Activated naive CD4-positive, alpha-beta T cell treated with anti-CD3 and anti-CD28 coated beads for 36 hours (primary cell): ENCODE measurements at regions of chr3 and their contacts with region 1.

Region 1: GRCh38 chr3:118938183-118938961 is 96.3 kb downstream of the IGSF11 start:
- DNase-seq: no peak
- H3K4me3 Mint-ChIP-seq: no peak overlapping the region
- H3K27ac Mint-ChIP-seq: peak overlapping the region; percentile 42
- H3K4me1 Mint-ChIP-seq: peaks cover 26% of the 10 kb centered on the region
- H3K27me3 Mint-ChIP-seq: no peaks in the 10 kb centered on the region

Region 2: DNA sequence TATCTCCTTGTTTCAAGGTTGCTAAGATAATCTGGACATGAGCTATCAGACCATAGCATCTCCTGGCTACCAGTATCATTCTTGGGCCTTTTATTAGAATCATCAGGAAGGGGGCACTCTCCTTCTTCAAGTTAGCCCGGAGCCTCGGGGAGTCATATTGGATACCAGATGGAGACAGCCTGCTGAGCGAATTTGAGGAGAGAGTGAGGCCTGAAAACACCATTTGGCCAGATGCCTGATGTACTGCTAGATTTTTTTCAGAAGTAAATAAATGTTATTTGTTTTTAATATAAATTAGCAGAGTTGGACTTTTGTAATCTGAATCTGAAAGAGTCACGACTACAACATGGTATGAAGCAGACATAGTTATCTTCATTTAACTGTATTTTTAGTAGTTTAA is 752.3 kb before region 1 on chr3:
- CTCF ChIA-PET with region 1: no interaction called
- intact Hi-C with region 1: no loop called
- DNase-seq: no peak
- H3K4me3 Mint-ChIP-seq: no peak overlapping the region
- H3K27ac Mint-ChIP-seq: no peak overlapping the region
- H3K4me1 Mint-ChIP-seq: no peaks in the 10 kb centered on the region
- H3K27me3 Mint-ChIP-seq: no peaks in the 10 kb centered on the region

Region 3: GRCh38 chr3:118949113-118949760 is 10.9 kb after region 1 on chr3:
- CTCF ChIA-PET with region 1: interaction called, 3 read pairs
- intact Hi-C with region 1: loop called (anchors 1 kb)
- DNase-seq: no peak
- H3K4me3 Mint-ChIP-seq: no peak overlapping the region
- H3K27ac Mint-ChIP-seq: peak overlapping the region; percentile 55
- H3K4me1 Mint-ChIP-seq: peaks cover 45% of the 10 kb centered on the region
- H3K27me3 Mint-ChIP-seq: no peaks in the 10 kb centered on the region

Region 4: DNA sequence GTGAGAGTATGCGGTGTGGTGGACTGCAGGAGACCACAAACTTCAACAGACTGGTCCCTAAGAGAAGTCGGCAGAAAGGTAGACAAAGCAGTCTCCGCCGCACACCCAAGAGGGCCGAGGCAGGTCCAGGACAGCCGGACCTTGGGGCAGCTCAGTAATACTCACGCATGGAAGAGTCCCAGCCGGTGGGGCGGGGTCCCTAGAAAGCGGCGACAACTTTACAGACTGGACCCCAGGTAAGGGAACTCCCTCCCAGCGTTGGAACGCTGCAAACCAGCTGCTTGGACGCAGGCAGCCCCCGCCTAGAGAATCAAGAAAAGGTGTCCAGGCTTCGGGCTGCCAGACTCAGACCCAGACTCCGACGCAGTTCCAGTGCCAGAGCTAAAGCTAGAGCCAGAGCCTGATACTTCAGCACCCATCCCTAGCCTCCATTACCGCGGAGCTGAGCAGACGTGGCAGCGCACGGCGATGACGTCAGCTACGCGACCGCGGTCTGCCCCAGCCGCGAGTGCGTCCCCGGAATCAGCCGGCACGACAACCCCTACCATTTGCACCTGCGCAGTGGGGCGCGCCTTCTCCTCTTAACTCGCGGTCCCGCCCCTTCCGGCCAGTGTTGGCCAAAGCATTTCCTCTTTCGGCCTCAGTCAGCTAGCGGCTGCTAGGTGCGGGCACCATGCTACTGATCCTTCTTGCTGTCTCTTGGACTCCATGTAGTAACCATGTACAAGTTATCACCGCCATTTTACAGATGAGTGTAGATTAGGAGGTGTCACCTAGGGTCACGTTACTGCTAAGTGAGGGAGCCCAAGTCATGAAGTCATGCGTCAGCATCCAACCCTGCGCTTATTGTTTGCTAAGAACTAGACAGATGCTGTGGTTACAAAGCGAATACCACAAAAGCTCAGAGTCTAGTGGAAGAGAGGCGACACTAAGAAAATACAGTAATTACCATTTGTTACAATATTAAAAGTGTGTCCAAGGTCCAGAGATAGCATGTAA is 525.1 kb after region 1 on chr3 and contains the start of gene TMEM39A:
- CTCF ChIA-PET with region 1: no interaction called
- intact Hi-C with region 1: no loop called
- DNase-seq: peak; percentile 98
- H3K4me3 Mint-ChIP-seq: peak within 1 kb of the TSS; percentile 96
- H3K27ac Mint-ChIP-seq: peak within 1 kb of the TSS; percentile 90
- H3K4me1 Mint-ChIP-seq: peaks cover 32% of the 10 kb centered on the region
- H3K27me3 Mint-ChIP-seq: no peaks in the 10 kb centered on the region
- total RNA-seq, gene TMEM39A: 21.4 to 26.9 TPM

Region 5: DNA sequence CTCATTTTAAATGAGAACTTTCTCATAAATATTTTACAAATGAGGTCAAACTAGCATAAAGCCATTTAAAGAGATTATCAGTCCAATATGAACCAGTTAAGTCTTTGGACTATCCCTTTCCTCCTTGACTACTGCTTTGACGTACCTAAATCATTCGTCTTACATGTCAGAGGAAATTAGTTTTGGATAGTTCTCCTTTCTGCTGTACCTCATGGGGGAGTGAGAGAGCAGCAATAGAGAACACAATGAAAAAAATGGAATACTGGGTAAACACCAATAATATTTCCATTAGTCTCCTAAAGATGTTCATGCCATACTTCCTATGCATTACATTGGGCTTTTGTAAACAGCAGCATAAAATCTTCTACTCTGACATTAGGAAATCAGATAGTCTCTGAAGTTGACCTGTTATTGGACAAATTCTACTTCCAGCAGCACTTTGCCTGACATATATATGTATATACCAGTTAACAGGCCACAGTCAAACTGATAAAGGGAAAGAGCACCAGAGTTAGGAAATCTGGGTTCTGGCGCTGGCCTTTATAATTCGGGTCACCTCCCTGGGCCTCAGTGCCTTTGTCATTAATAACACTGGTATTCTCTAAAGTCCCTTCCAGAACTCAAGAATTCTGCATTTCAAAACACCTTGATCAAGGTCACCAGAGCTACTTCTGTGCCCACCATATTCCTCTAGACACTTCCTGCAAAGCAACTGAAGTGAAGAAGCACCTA is 586.7 kb after region 1 on chr3:
- CTCF ChIA-PET with region 1: no interaction called
- intact Hi-C with region 1: no loop called
- DNase-seq: no peak
- H3K4me3 Mint-ChIP-seq: no peak overlapping the region
- H3K27ac Mint-ChIP-seq: no peak overlapping the region
- H3K4me1 Mint-ChIP-seq: no peaks in the 10 kb centered on the region
- H3K27me3 Mint-ChIP-seq: no peaks in the 10 kb centered on the region